OCI-LY7 (cell line): ENCODE measurements at regions of chr6 and their contacts with region 1.

Region 1: GRCh38 chr6:27753668-27754407 is 158.4 kb downstream of the OR2B2 start:
- DNase-seq: peak; percentile 87
- H3K4me3 ChIP-seq: peak overlapping the region; percentile 77
- H3K27ac ChIP-seq: no peak overlapping the region
- H3K4me1 ChIP-seq: peaks cover 11% of the 10 kb centered on the region
- CTCF ChIP-seq: 0 out of 2 replicates have a peak, but pooled peaks have one; percentile 27

Region 2: GRCh38 chr6:27146706-27147505 is 606.9 kb before region 1 on chr6:
- CTCF ChIA-PET with region 1: no interaction called
- POLR2A ChIA-PET with region 1: interaction called, 12 read pairs
- intact Hi-C with region 1: no loop called
- DNase-seq: peak; percentile 98
- H3K4me3 ChIP-seq: peak overlapping the region; percentile 73
- H3K27ac ChIP-seq: peak overlapping the region; percentile 99
- H3K4me1 ChIP-seq: peaks cover 60% of the 10 kb centered on the region
- CTCF ChIP-seq: no peak

Region 3: GRCh38 chr6:27312146-27312949 is 441.5 kb before region 1 on chr6 and contains the start of gene POM121L2:
- CTCF ChIA-PET with region 1: no interaction called
- POLR2A ChIA-PET with region 1: no interaction called
- intact Hi-C with region 1: loop called (anchors 1 kb)
- DNase-seq: peak; percentile 65
- H3K4me3 ChIP-seq: peak within 1 kb of the TSS; percentile 62
- H3K27ac ChIP-seq: no peak within 1 kb of the TSS
- H3K4me1 ChIP-seq: no peaks in the 10 kb centered on the region
- CTCF ChIP-seq: peak; percentile 83
- total RNA-seq, gene POM121L2: not detected in 2 replicates

Region 4: DNA sequence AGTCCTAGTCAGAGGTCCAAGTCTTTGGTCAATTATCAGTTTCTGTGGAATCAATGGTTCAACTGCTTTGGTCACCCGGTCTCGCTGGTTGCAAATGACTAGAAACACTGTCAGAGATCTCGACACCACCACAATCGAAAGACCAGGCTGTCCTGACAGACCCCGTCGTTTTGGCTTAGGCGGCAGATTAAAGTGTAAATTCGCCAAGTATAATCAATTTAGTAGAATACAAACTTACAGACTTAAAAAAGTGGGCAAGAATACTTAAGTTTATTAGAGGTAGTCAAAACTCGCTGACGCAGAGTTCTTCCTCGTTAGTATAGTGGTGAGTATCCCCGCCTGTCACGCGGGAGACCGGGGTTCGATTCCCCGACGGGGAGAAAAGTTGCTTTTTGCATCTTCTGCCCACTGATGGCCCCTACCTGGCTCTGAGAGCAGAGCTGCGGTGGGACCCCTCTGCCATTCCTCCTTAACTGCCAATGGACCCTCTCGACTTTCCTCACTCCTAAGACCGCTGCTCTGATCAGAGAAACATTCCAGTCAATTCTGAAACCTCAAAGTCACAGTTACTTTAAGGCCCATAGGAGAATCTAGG is 250.3 kb before region 1 on chr6:
- CTCF ChIA-PET with region 1: no interaction called
- POLR2A ChIA-PET with region 1: no interaction called
- intact Hi-C with region 1: loop called (anchors 5 kb)
- DNase-seq: peak; percentile 74
- H3K4me3 ChIP-seq: peak overlapping the region; percentile 74
- H3K27ac ChIP-seq: peak overlapping the region; percentile 22
- H3K4me1 ChIP-seq: peaks cover 12% of the 10 kb centered on the region
- CTCF ChIP-seq: no peak

Region 5: GRCh38 chr6:27687154-27688013 is 66.5 kb before region 1 on chr6:
- CTCF ChIA-PET with region 1: no interaction called
- POLR2A ChIA-PET with region 1: interaction called, 3 read pairs
- intact Hi-C with region 1: loop called (anchors 2 kb)
- DNase-seq: peak; percentile 87
- H3K4me3 ChIP-seq: peak overlapping the region; percentile 67
- H3K27ac ChIP-seq: peak overlapping the region; percentile 41
- H3K4me1 ChIP-seq: no peaks in the 10 kb centered on the region
- CTCF ChIP-seq: peak; percentile 83

Region 6: DNA sequence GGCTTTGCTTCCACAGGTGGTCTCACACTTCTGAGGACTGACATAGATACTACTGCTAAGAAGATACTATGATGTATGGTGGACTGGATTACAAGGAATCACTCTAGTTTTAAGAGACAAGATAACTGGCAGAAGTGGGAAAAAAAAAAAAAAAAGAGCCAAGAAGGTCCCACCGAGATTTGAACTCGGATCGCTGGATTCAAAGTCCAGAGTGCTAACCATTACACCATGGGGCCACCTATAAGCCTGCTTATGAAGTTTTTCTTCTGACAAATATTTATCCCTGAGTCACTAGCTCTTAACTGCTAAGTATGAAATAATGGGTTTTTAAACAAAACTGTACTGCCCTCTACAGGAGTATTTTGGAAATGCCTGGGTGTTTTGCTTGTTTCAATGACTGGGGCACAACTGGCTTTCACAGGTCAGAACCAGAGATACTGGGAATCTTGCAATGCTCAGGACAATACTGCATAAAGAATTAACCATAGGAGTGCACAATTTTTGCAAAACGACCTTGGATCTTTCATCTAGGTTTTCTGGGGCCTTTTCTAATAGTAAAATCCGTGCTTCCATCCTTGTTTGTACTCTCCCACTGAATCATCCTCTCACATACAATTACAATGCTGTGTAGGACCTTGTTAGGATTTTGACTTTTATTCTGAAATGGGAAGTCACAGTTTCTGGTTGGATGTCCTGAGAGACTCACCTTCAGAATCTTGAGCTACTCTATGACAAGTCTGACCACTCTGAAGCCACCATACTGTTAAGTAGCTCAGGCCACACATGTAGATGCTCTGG is 42.1 kb after region 1 on chr6:
- CTCF ChIA-PET with region 1: interaction called, 5 read pairs
- POLR2A ChIA-PET with region 1: interaction called, 13 read pairs
- intact Hi-C with region 1: no loop called
- DNase-seq: peak; percentile 88
- H3K4me3 ChIP-seq: peak overlapping the region; percentile 33
- H3K27ac ChIP-seq: peak overlapping the region; percentile 32
- H3K4me1 ChIP-seq: peaks cover 33% of the 10 kb centered on the region
- CTCF ChIP-seq: peak; percentile 88

Region 7: GRCh38 chr6:29516108-29516507 is 1762.3 kb after region 1 on chr6:
- CTCF ChIA-PET with region 1: no interaction called
- POLR2A ChIA-PET with region 1: no interaction called
- intact Hi-C with region 1: no loop called
- DNase-seq: no peak
- H3K4me3 ChIP-seq: no peak overlapping the region
- H3K27ac ChIP-seq: no peak overlapping the region
- H3K4me1 ChIP-seq: no peaks in the 10 kb centered on the region
- CTCF ChIP-seq: no peak